ENCODE measurements at regions of chr6 and their contacts with region 1.

Region 1: GRCh38 chr6:123636782-123637181 is at the start of gene TRDN:
- DNase-seq: peak in 3 of 5 donors; percentile 17 to 45 (median 38)
- ATAC-seq: peak; percentile 85 to 89 (median 88)
- H3K4me3 ChIP-seq: peak within 1 kb of the TSS; percentile 1 to 70 (median 54)
- H3K27ac ChIP-seq: peak within 1 kb of the TSS; percentile 77 to 97 (median 88)
- H3K4me1 ChIP-seq: peaks cover 0 to 22% (median 3%) of the 10 kb centered on the region in 12 donors
- H3K27me3 ChIP-seq: no peaks in the 10 kb centered on the region
- CTCF ChIP-seq: no peak
- POLR2A ChIP-seq: peak in 1 of 2 donors; percentile 33
- total RNA-seq, gene TRDN: 283 to 540 (median 381) TPM

Region 2: GRCh38 chr6:123509112-123509511 is 127.7 kb before region 1 on chr6:
- intact Hi-C with region 1: loop called in 4 of 10 experiments (anchors 10 kb)
- DNase-seq: no peak
- ATAC-seq: peak in 1 of 4 donors; percentile 12
- H3K4me3 ChIP-seq: no peak overlapping the region
- H3K27ac ChIP-seq: no peak overlapping the region
- H3K4me1 ChIP-seq: no peaks in the 10 kb centered on the region
- H3K27me3 ChIP-seq: no peaks in the 10 kb centered on the region
- CTCF ChIP-seq: no peak
- POLR2A ChIP-seq: no peak

Region 3: DNA sequence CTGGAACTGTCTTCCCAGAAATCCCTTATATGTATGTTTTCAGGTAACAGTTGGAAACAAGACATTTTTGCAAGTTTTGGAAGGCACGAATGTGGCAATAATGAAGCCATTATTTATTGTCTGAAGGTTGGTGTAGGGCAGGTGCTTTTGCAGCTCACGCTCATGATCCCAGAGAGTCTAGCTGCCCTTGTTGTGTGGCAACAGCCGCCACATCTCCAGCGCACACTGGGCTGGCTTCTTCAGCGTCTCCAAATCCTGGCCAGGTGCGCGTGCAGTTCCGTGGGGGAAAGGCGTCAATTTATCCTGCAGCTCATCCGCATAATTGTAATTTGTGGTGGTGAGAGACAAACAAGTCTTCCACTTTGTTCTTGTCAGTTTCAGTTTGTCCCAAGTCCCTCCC is 71.3 kb before region 1 on chr6:
- intact Hi-C with region 1: loop called in 1 of 10 experiments (anchors 5 kb)
- DNase-seq: no peak
- ATAC-seq: no peak
- H3K4me3 ChIP-seq: no peak overlapping the region
- H3K27ac ChIP-seq: no peak overlapping the region
- H3K4me1 ChIP-seq: peaks cover 0 to 27% (median 7%) of the 10 kb centered on the region in 12 donors
- H3K27me3 ChIP-seq: no peaks in the 10 kb centered on the region
- CTCF ChIP-seq: no peak
- POLR2A ChIP-seq: no peak

Region 4: GRCh38 chr6:123953920-123954319 is 317.1 kb after region 1 on chr6:
- intact Hi-C with region 1: no loop called
- DNase-seq: peak in 1 of 5 donors; percentile 32
- ATAC-seq: peak in 3 of 4 donors; percentile 34 to 86 (median 41)
- H3K4me3 ChIP-seq: no peak overlapping the region
- H3K27ac ChIP-seq: no peak overlapping the region
- H3K4me1 ChIP-seq: no peaks in the 10 kb centered on the region
- H3K27me3 ChIP-seq: no peaks in the 10 kb centered on the region
- CTCF ChIP-seq: no peak
- POLR2A ChIP-seq: no peak